IMR-90 (cell line): ENCODE measurements at regions of chr1 and their contacts with region 1.

Region 1: DNA sequence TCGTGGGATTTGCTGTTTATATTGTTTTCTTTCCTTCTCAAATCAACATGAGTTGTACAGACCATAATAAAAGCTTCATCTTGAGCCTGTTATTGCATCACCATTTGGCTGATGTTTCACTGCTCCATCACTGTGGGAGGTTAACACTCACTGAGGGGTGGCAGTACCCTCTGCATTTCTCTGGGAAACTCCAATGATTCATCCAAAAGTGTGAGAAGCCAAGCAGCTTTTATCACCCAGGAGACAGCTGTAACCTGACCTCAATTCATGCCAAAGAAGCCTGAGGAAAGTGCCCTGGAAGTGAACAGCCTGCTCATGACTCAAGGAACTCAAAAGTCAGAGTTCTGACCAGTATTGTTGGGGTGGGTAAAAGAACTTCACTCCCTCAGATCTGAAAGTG is 84.1 kb downstream of the GPR88 start:
- DNase-seq: peak; percentile 99
- ATAC-seq: peak; percentile 73
- H3K4me3 ChIP-seq: no peak overlapping the region
- H3K27ac ChIP-seq: peak overlapping the region; percentile 93; the same call in 1 of the 2 replicates
- H3K4me1 ChIP-seq: peaks cover 21% of the 10 kb centered on the region
- H3K27me3 ChIP-seq: no peaks in the 10 kb centered on the region
- CTCF ChIP-seq: no peak
- POLR2A ChIP-seq: no peak
- RAD21 ChIP-seq: peak; percentile 20

Region 2: DNA sequence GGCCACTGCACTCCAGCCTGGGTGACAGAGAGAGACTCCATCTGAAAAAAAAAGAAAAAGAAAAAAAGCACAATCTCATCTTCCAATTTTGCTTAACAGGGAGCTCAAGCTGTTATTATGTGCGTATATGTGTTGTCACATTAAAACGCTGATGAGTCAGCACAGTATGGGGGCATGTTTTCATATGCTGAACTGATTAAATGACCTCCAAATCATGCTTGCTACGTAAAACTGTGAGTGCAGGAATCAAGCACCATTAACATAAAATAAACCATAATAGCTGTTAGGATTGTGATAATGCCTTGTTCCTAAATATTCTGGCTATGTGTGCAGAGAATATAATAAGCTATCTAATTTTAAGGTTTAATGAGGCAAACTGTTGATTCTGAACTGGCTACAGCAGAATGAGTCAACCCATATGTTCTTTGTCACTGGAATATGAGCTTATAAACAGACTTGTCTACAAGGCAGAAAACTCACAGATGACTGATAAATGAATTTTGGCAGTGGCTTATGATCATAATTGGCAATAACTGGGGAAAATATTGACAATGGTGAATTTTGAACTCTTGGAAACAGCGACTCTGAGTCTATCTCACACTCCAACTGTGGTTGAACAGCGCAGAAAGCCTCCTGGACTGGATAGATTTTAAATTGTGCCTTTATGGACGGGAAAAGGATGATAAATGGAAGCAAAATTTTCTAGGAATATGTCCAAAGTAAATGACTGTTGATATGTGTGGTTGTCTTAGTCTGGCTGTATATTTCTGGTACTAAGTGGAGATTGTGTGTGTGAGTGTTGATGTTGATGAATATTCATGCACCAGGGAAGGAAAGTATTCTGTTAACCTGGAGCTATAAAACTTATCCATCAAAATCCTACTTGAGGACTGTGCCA is 173.0 kb after region 1 on chr1:
- CTCF ChIA-PET with region 1: no interaction called
- POLR2A ChIA-PET with region 1: interaction called, 8 read pairs
- dilution Hi-C with region 1: no loop called
- in situ Hi-C with region 1: no loop called
- intact Hi-C with region 1: loop called (anchors 10 kb)
- DNase-seq: peak; percentile 90
- ATAC-seq: peak; percentile 73
- H3K4me3 ChIP-seq: no peak overlapping the region
- H3K27ac ChIP-seq: peak overlapping the region; percentile 82; the same call in 1 of the 2 replicates
- H3K4me1 ChIP-seq: peaks cover 15% of the 10 kb centered on the region
- H3K27me3 ChIP-seq: no peaks in the 10 kb centered on the region
- CTCF ChIP-seq: no peak
- POLR2A ChIP-seq: no peak
- RAD21 ChIP-seq: no peak